ENCODE measurements at regions of chr12 and their contacts with region 1.

Region 1: GRCh38 chr12:121773011-121773777 is 20.3 kb downstream of the RHOF start:
- DNase-seq: peak; percentile 66
- ATAC-seq: peak; percentile 58 to 76

Region 2: GRCh38 chr12:121697098-121697698 is 76.0 kb before region 1 on chr12:
- intact Hi-C with region 1: loop called (anchors 1 to 5 kb)
- DNase-seq: no peak
- ATAC-seq: no peak

Region 3: DNA sequence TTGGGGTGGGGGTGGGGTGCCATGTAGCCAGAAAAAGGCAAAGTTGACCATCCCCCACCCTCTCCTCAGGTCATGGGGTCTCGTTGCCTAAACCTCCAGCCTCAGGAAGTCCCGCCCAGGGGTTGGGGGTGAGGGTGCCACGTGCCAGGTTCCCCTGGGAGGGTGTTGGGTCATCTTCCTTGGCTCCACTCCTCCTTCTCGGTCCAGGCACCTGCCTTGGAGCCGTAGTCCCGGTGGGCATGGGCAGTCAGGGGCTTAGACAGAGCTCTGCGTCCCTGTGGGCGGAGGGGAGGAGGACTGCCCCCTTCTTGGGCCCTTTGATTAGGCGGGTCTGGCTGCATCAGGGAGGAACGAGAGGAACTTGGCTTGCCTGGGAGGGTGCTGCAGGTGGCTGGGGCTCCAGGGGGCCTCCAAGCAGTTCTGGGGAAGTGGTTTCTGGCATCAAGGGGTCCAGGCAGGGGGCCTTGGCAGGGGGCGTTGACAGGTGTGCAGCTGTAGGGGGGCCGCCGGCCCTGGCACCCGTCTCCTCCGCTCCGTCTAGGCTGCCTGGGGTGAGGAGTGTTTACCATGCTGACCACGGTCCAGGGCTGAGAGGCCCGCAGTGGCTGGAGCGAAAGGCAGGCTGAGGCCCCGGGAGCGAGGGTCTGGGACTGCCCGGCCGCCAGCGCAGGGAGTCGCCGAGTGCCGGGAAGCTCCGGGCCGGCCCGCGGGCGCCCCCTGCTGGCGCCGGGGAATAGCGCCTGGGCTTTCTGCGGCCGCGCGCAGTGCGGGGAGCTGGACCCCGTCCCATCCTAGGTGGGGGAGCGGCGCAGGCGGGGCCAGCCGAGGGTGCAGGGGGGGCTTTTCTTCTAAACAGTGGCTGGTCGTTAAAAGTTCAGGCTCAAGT is 38.5 kb after region 1 on chr12:
- intact Hi-C with region 1: loop called in 1 of 2 experiments (anchors 5 kb)
- DNase-seq: peak; percentile 78
- ATAC-seq: peak; percentile 90

Region 4: DNA sequence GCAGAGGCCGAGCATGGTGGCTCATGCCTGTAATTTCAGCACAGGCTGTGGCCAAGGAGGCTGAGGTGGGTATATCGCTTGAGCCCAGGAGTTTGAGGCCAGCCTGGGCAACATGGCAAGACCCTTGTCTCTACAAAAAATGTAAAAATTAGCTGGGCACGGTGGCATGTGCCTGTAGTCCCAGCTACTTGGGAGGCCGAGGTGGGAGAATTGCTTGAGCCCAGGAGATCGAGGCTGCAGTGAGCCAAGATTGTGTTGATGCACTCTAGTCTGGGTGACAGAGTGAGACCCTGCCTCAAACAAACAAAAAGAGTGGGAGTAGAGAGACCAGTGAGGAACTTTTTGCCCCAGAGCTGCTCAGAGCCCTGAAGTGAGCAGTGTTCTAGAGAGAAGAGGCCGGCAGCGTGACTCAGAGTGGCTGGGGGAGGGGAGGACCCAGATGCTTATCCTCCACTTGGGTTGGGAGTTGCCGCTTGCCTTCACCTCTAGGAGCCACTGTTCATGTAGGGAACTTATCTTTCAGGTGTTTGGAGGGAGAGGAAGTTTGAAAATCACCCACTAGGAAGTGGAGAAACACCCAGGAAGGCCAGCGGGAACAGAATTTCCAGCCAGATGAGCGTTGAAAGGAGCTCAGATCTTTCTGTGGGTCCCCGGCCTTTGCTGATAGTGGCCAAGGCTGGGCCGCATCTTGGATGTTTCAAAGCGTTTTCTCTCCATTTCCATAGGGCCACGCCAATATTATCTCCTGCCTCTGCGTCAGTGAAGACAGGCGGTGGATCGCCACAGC is 160.5 kb after region 1 on chr12:
- intact Hi-C with region 1: no loop called
- DNase-seq: no peak
- ATAC-seq: peak in 1 of 2 donors; percentile 78

Measured in left cardiac atrium (tissue), 4 donors.